ENCODE measurements at regions of chr1 and their contacts with region 1.

Region 1: DNA sequence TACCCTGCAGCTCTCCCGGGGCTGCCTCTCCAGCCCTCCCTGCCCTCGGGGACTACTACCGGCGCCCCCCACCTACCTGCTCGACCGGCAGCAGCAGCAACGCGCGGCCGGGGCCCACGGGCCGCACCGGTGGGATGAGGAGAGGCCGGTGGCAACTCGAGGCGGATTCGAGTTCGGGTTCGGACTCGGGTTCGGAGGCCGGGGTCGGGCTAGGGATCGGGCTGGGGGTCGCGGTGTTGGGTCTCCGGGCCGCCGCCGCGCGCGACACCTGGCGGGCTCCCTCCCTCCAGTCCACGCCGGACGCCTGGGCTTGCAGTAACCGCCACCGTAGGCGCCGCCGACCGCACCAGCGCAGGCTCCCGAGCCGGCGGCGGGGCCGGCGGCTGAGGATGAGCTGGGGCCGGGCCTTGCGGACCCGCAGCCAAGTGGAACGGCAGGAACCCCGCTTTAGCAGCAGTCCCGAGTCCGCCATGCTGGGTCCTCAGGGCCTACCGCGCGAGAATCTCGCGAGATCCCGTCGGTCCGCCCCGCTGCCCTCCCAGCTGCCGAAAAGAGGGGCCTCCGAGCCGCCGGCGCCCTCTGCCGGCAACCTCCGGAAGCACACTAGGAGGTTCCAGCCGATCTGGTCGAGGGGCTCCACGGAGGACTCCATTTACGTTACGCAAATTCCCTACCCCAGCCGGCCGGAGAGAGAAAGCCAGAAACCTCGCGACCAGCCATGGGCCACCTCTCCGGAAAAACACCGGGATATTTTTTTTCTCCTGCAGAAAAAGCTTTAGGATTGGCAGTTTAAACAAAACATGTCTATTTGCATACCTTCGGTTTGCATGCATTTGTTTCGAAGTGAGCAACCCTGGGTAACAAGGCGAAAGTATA is at the start of gene NOL9:
- DNase-seq: peak; percentile 96
- ATAC-seq: peak; percentile 96 to 99 (median 98)
- H3K4me3 ChIP-seq: peak within 1 kb of the TSS; percentile 79 to 100 (median 94)
- H3K27ac ChIP-seq: peak within 1 kb of the TSS; percentile 20 to 90 (median 85)
- H3K4me1 ChIP-seq: peaks cover 10 to 26% (median 22%) of the 10 kb centered on the region in 9 donors
- H3K27me3 ChIP-seq: no peaks in the 10 kb centered on the region
- CTCF ChIP-seq: peak; percentile 93 to 98 (median 96)
- total RNA-seq, gene NOL9: 13.5 to 19.3 (median 15.3) TPM

Region 2: DNA sequence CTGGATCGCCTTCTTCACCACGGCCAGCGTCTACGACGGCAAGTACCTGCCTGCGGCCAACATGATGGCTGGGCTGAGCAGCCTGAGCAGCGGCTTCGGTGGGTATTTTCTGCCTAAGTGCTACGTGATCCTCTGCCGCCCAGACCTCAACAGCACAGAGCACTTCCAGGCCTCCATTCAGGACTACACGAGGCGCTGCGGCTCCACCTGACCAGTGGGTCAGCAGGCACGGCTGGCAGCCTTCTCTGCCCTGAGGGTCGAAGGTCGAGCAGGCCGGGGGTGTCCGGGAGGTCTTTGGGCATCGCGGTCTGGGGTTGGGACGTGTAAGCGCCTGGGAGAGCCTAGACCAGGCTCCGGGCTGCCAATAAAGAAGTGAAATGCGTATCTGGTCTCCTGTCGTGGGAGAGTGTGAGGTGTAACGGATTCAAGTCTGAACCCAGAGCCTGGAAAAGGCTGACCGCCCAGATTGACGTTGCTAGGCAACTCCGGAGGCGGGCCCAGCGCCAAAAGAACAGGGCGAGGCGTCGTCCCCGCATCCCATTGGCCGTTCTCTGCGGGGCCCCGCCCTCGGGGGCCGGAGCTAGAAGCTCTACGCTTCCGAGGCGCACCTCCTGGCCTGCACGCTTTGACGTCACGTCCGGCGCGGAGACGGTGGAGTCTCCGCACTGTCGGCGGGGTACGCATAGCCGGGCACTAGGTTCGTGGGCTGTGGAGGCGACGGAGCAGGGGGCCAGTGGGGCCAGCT is 25.3 kb after region 1 on chr1 and contains the start of gene ZBTB48:
- intact Hi-C with region 1: loop called in 3 of 10 experiments (anchors 1 to 2 kb)
- DNase-seq: peak; percentile 99 to 100
- ATAC-seq: peak; percentile 95 to 99 (median 98)
- H3K4me3 ChIP-seq: peak within 1 kb of the TSS; percentile 78 to 98 (median 89)
- H3K27ac ChIP-seq: peak within 1 kb of the TSS; percentile 68 to 97 (median 94)
- H3K4me1 ChIP-seq: peaks cover 18 to 50% (median 40%) of the 10 kb centered on the region in 9 donors
- H3K27me3 ChIP-seq: no peaks in the 10 kb centered on the region
- CTCF ChIP-seq: no peak
- total RNA-seq, gene ZBTB48: 7.3 to 16.6 (median 11.0) TPM

Region 3: DNA sequence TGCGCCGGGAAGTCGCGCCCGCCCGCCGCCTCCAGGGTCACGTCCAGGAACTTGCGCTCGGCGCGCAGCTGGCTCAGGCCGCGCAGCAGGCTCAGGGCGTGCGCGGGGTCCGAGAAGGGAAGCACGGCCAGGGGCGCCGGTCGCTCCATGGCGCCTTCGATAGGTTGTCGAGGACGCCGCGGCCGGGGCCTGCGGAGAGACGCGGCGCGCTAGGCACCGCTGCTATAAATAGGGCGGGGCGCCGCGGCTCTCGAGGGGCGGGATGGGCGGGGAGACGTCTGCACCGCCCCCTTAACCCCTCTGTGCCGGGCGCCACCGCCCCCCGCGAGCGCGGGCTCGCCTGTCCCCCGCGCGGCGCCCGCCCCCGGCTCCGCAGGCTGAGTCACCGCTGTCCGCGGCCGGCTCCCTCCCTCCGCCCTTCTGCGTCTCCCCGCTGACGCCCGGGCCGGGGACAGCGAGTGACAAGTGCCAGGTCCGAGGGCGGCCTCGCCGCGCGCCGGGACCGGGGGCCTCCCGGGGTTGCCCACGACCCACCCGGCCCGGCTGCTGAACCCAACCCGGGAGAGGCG is 48.5 kb after region 1 on chr1 and contains the start of gene KLHL21:
- intact Hi-C with region 1: loop called in 3 of 10 experiments (anchors 1 to 10 kb)
- DNase-seq: peak; percentile 91 to 92
- ATAC-seq: peak; percentile 68 to 89 (median 84)
- H3K4me3 ChIP-seq: peak within 1 kb of the TSS; percentile 68 to 96 (median 86)
- H3K27ac ChIP-seq: peak within 1 kb of the TSS; percentile 96 to 100 (median 99)
- H3K4me1 ChIP-seq: peaks cover 18 to 68% (median 53%) of the 10 kb centered on the region in 9 donors
- H3K27me3 ChIP-seq: no peaks in the 10 kb centered on the region
- CTCF ChIP-seq: no peak
- total RNA-seq, gene KLHL21: 49.5 to 93.3 (median 70.4) TPM

Region 4: DNA sequence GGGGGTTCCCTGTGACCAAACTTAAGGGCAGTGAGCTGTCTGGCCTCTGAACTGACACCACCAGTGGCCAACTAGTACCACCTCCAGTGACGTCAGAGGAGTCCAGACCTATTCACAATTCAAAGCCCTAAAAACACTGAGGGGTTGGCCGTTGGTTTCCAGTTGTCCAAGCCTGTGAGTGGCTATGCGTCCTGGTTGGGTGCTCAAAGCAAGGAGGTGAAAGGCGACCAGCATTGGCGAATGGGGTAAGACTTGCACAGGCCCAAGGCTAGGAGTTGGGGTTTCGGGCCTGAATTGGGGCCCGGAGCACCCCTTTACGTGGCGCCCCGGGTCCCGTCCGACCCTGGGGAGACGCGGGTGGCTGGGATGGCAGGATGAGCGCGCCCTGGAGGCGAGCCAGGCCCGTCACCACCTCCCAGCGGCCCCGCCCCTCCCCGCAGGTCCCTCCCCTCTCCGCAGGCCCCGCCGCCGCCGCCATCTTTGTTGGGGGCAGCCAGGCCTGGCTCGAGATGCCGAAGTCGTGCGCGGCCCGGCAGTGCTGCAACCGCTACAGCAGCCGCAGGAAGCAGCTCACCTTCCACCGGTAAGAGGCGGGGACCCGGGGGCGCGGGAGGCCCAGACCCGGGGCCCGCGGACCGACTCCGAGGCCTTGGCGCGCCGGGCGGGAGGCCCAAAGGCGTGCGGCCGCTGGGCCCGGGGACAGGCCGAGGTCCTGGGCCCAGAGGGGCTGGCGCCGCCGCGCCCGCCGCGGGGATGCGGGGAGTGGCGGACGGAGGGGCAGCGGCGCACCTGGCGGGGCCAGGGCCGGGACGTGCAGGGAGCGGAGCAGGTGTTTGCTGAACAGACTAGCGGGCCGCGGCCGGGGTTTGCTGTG is 70.7 kb after region 1 on chr1 and contains the start of gene THAP3:
- intact Hi-C with region 1: loop called in 3 of 10 experiments (anchors 5 to 10 kb)
- DNase-seq: peak; percentile 89 to 92
- ATAC-seq: peak; percentile 90 to 95 (median 93)
- H3K4me3 ChIP-seq: peak within 1 kb of the TSS; percentile 64 to 95 (median 86)
- H3K27ac ChIP-seq: peak within 1 kb of the TSS; percentile 54 to 91 (median 85)
- H3K4me1 ChIP-seq: peaks cover 8 to 26% (median 22%) of the 10 kb centered on the region in 9 donors
- H3K27me3 ChIP-seq: no peaks in the 10 kb centered on the region
- CTCF ChIP-seq: peak in 3 of 9 donors; percentile 16 to 38 (median 32)
- total RNA-seq, gene THAP3: 6.8 to 16.7 (median 11.2) TPM

Region 5: GRCh38 chr1:6634371-6635052 is 80.2 kb after region 1 on chr1:
- intact Hi-C with region 1: loop called in 4 of 10 experiments (anchors 5 to 10 kb)
- DNase-seq: peak; percentile 69 to 73
- ATAC-seq: peak; percentile 61 to 82 (median 78)
- H3K4me3 ChIP-seq: no peak overlapping the region
- H3K27ac ChIP-seq: peak overlapping the region in 2 of 10 donors; percentile 2 to 60
- H3K4me1 ChIP-seq: peaks cover 0 to 12% (median 0%) of the 10 kb centered on the region in 9 donors
- H3K27me3 ChIP-seq: no peaks in the 10 kb centered on the region
- CTCF ChIP-seq: peak in 8 of 9 donors; percentile 36 to 68 (median 54)

Region 6: DNA sequence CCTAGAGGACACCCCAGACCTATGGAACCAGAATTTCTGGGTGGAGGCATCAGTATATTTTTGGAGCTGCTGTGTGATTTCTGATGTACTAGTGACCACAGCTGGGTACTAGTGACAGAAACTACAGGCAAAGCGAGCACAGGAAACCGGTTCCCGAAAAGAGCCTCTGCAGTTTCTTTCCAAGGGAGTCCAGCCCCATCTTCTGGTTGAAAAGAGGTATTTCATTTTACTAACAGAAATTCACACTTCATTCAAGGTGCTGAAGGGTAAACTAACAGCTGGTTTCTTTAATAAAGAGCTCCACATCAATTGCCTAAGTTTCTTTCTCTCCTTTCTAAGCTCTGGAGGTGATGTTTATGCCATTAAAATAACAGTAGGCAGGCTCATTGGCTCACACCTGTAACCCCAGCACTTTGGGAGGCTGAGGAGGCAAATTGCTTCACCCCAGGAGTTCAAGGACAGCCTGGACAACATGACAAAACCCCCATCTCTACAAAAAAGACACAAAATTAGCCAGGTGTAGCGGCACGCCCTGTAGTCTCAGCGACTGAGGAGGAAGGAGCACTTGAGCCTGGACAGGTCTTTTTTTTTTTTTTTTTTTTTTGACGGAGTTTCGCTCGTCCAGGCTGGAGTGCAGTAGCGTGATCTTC is 92.4 kb after region 1 on chr1:
- intact Hi-C with region 1: loop called in 5 of 10 experiments (anchors 5 kb)
- DNase-seq: no peak
- ATAC-seq: peak; percentile 14 to 68 (median 44)
- H3K4me3 ChIP-seq: no peak overlapping the region
- H3K27ac ChIP-seq: no peak overlapping the region
- H3K4me1 ChIP-seq: no peaks in the 10 kb centered on the region
- H3K27me3 ChIP-seq: no peaks in the 10 kb centered on the region
- CTCF ChIP-seq: peak; percentile 32 to 72 (median 65)

Measured in heart right ventricle (tissue), 16 donors.